ENCODE measurements at regions of chr3 and their contacts with region 1.

Region 1: GRCh38 chr3:185328324-185329004 is 34.5 kb upstream of the MAP3K13 start:
- DNase-seq: no peak
- H3K4me3 ChIP-seq: no peak overlapping the region
- H3K27ac ChIP-seq: no peak overlapping the region
- H3K4me1 ChIP-seq: no peaks in the 10 kb centered on the region
- H3K27me3 ChIP-seq: no peaks in the 10 kb centered on the region
- CTCF ChIP-seq: no peak
- EP300 ChIP-seq: no peak
- POLR2A ChIP-seq: no peak
- RAD21 ChIP-seq: no peak

Region 2: GRCh38 chr3:185308126-185308754 is 20.2 kb before region 1 on chr3:
- CTCF ChIA-PET with region 1: interaction called, 12 read pairs
- POLR2A ChIA-PET with region 1: no interaction called
- DNase-seq: peak; percentile 34 to 89
- H3K4me3 ChIP-seq: no peak overlapping the region
- H3K27ac ChIP-seq: no peak overlapping the region
- H3K4me1 ChIP-seq: peaks cover 0 to 3% (median under 1%) of the 10 kb centered on the region in 4 experiments; a peak in 3 of 7 replicates
- H3K27me3 ChIP-seq: no peaks in the 10 kb centered on the region
- CTCF ChIP-seq: peak in 2 of 3 experiments; percentile 67 to 77; a peak in 3 of 4 replicates
- EP300 ChIP-seq: no peak
- POLR2A ChIP-seq: no peak
- RAD21 ChIP-seq: peak; percentile 78 to 82